H1 (cell line): ENCODE measurements at regions of chr17 and their contacts with region 1.

Region 1: GRCh38 chr17:50361561-50362480 is 11.2 kb downstream of the MRPL27 start:
- DNase-seq: peak; percentile 34 to 67
- H3K4me3 ChIP-seq: no peak overlapping the region
- H3K27ac ChIP-seq: no peak overlapping the region
- H3K4me1 ChIP-seq: peaks cover 0 to 27% (median 11%) of the 10 kb centered on the region in 4 experiments; a peak in 6 of 7 replicates
- H3K27me3 ChIP-seq: no peaks in the 10 kb centered on the region
- CTCF ChIP-seq: peak; percentile 63 to 85 (median 79)
- EP300 ChIP-seq: no peak
- POLR2A ChIP-seq: no peak; a peak in 1 of 3 replicates
- RAD21 ChIP-seq: peak; percentile 53 to 65

Region 2: GRCh38 chr17:50244771-50245170 is 117.0 kb before region 1 on chr17:
- CTCF ChIA-PET with region 1: no interaction called
- POLR2A ChIA-PET with region 1: no interaction called
- DNase-seq: no peak
- H3K4me3 ChIP-seq: no peak overlapping the region
- H3K27ac ChIP-seq: no peak overlapping the region
- H3K4me1 ChIP-seq: no peaks in the 10 kb centered on the region
- H3K27me3 ChIP-seq: no peaks in the 10 kb centered on the region
- CTCF ChIP-seq: no peak
- EP300 ChIP-seq: no peak
- POLR2A ChIP-seq: no peak
- RAD21 ChIP-seq: no peak

Region 3: GRCh38 chr17:50331085-50331791 is 30.6 kb before region 1 on chr17:
- CTCF ChIA-PET with region 1: interaction called, 27 read pairs
- POLR2A ChIA-PET with region 1: interaction called, 3 read pairs
- DNase-seq: no peak
- H3K4me3 ChIP-seq: no peak overlapping the region
- H3K27ac ChIP-seq: no peak overlapping the region
- H3K4me1 ChIP-seq: peaks cover 0 to 2% (median 0%) of the 10 kb centered on the region in 4 experiments; a peak in 1 of 7 replicates
- H3K27me3 ChIP-seq: no peaks in the 10 kb centered on the region
- CTCF ChIP-seq: no peak
- EP300 ChIP-seq: no peak
- POLR2A ChIP-seq: no peak
- RAD21 ChIP-seq: no peak

Region 4: GRCh38 chr17:50372758-50373556 is 11.1 kb after region 1 on chr17 and contains the starts of genes EME1 and MRPL27:
- CTCF ChIA-PET with region 1: interaction called, 51 read pairs
- POLR2A ChIA-PET with region 1: interaction called, 313 read pairs
- DNase-seq: peak; percentile 36 to 86
- H3K4me3 ChIP-seq: peak within 1 kb of the TSS; percentile 86 to 97 (median 92)
- H3K27ac ChIP-seq: peak within 1 kb of the TSS; percentile 97
- H3K4me1 ChIP-seq: peaks cover 0 to 9% (median under 1%) of the 10 kb centered on the region in 4 experiments; a peak in 2 of 7 replicates
- H3K27me3 ChIP-seq: no peaks in the 10 kb centered on the region
- CTCF ChIP-seq: no peak
- EP300 ChIP-seq: 0 out of 3 replicates have a peak, but pooled peaks of 1 of the 2 experiments have one; percentile 9
- POLR2A ChIP-seq: peak; percentile 63 to 92
- RAD21 ChIP-seq: no peak
- total RNA-seq, gene EME1: 13.3 and 13.9 TPM in 2 replicates
- total RNA-seq, gene MRPL27: 75.6 and 82.6 TPM in 2 replicates

Region 5: GRCh38 chr17:50386510-50386909 is 24.7 kb after region 1 on chr17:
- CTCF ChIA-PET with region 1: interaction called, 51 read pairs
- POLR2A ChIA-PET with region 1: interaction called, 313 read pairs
- DNase-seq: no peak
- H3K4me3 ChIP-seq: no peak overlapping the region
- H3K27ac ChIP-seq: no peak overlapping the region
- H3K4me1 ChIP-seq: no peaks in the 10 kb centered on the region
- H3K27me3 ChIP-seq: no peaks in the 10 kb centered on the region
- CTCF ChIP-seq: no peak
- EP300 ChIP-seq: no peak
- POLR2A ChIP-seq: no peak
- RAD21 ChIP-seq: no peak

Region 6: GRCh38 chr17:50458701-50459676 is 97.2 kb after region 1 on chr17:
- CTCF ChIA-PET with region 1: no interaction called
- POLR2A ChIA-PET with region 1: no interaction called
- DNase-seq: no peak
- H3K4me3 ChIP-seq: no peak overlapping the region
- H3K27ac ChIP-seq: no peak overlapping the region
- H3K4me1 ChIP-seq: no peaks in the 10 kb centered on the region
- H3K27me3 ChIP-seq: no peaks in the 10 kb centered on the region
- CTCF ChIP-seq: no peak
- EP300 ChIP-seq: no peak
- POLR2A ChIP-seq: no peak
- RAD21 ChIP-seq: no peak